ENCODE measurements at regions of chr1 and their contacts with region 1.

Region 1: DNA sequence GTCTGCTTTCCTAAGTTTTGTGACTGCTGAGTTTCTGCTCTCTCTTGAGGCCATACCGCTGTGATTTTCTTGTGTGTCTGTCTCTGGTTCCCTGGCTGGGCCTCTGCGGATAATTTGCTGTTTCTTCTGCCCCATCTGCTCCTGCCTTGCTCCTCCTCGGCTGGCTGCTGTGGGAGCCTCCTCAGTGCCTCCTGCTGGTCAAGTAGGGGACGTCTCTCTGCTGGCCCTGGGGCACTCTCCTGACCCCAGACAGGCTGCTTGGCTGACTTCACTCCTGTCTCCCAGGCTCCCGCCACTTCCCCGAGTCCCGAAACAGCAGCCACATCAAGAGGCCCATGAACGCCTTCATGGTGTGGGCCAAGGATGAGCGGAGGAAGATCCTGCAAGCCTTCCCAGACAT is 28.5 kb downstream of the ETNK2 start:
- DNase-seq: no peak
- ATAC-seq: no peak
- H3K4me3 ChIP-seq: no peak overlapping the region
- H3K27ac ChIP-seq: no peak overlapping the region
- H3K4me1 ChIP-seq: peaks cover 4% of the 10 kb centered on the region
- H3K27me3 ChIP-seq: no peaks in the 10 kb centered on the region

Region 2: GRCh38 chr1:203985044-203985443 is 138.3 kb before region 1 on chr1:
- intact Hi-C with region 1: no loop called
- DNase-seq: no peak
- ATAC-seq: no peak
- H3K4me3 ChIP-seq: no peak overlapping the region
- H3K27ac ChIP-seq: no peak overlapping the region
- H3K4me1 ChIP-seq: no peaks in the 10 kb centered on the region
- H3K27me3 ChIP-seq: no peaks in the 10 kb centered on the region

Region 3: GRCh38 chr1:204072931-204073836 is 50.2 kb before region 1 on chr1 and contains the start of gene SOX13:
- intact Hi-C with region 1: loop called in 2 of 4 experiments (anchors 2 to 5 kb)
- DNase-seq: peak; percentile 89 to 96 (median 95)
- ATAC-seq: peak; percentile 84 to 89
- H3K4me3 ChIP-seq: peak within 1 kb of the TSS; percentile 89
- H3K27ac ChIP-seq: peak within 1 kb of the TSS; percentile 86
- H3K4me1 ChIP-seq: peaks cover 4% of the 10 kb centered on the region
- H3K27me3 ChIP-seq: no peaks in the 10 kb centered on the region
- total RNA-seq, gene SOX13: 11.4 to 17.9 (median 12.6) TPM

Region 4: GRCh38 chr1:204241050-204241449 is 117.7 kb after region 1 on chr1:
- intact Hi-C with region 1: no loop called
- DNase-seq: no peak
- ATAC-seq: peak in 1 of 2 donors; percentile 22
- H3K4me3 ChIP-seq: no peak overlapping the region
- H3K27ac ChIP-seq: no peak overlapping the region
- H3K4me1 ChIP-seq: no peaks in the 10 kb centered on the region
- H3K27me3 ChIP-seq: no peaks in the 10 kb centered on the region